Ascending aorta (tissue), 2 donors: ENCODE measurements at regions of chr3 and their contacts with region 1.

Region 1: DNA sequence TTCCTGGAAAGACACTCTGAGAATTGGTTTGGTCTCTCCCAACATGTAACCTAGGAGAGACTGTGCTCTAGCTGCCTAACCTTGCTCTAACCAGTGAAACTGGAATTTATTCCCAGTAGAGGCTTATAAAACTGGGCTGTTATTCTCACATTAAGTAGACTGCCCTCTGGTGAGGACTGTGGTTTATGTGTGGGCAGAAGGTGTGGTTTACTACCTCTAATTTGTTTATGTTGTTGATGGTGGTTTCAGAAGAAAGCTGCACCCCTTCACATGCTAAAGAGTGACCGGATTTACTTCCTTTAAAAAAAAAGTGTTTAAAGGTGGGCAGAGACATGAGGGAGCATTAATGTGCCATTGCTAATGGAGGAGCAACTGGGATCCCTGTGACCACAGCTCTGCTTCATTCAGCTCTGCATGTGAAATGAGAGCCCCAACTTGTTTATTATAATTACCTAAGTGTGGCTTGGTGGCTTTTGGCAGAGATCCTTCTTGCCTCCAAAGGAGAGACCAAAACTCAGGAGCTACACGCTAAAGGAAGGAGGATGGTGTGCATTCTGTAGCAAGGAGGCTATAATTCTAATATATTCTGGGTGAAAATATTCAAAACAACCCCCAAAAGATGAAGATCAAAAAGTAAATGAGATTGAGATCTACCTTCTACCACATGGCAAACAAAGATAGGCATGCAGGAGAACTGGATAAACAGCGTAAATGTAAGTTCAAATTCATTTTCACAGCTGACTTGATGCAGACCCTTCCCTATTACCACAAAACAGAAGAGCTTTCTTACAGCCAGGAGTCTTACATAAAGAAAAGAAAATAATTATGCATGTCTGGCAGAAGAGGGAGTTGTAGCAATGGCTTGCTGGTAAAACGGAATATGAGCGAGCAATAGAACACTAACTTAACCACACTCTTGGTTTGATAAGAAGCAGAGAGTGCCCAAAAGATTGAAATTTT is 273.0 kb downstream of the MECOM start:
- DNase-seq: no peak
- H3K4me3 ChIP-seq: no peak overlapping the region
- H3K27ac ChIP-seq: peak overlapping the region; percentile 72 to 74
- H3K4me1 ChIP-seq: peaks cover 0 to 18% of the 10 kb centered on the region in 2 donors
- H3K27me3 ChIP-seq: no peaks in the 10 kb centered on the region
- CTCF ChIP-seq: peak in 1 of 3 experiments; percentile 48

Region 2: GRCh38 chr3:169218314-169218983 is 172.1 kb before region 1 on chr3:
- intact Hi-C with region 1: loop called (anchors 5 kb)
- DNase-seq: peak in 1 of 2 donors; percentile 78
- H3K4me3 ChIP-seq: no peak overlapping the region
- H3K27ac ChIP-seq: peak overlapping the region in 1 of 2 donors; percentile 11
- H3K4me1 ChIP-seq: no peaks in the 10 kb centered on the region
- H3K27me3 ChIP-seq: no peaks in the 10 kb centered on the region
- CTCF ChIP-seq: peak; percentile 56 to 78 (median 73)

Region 3: DNA sequence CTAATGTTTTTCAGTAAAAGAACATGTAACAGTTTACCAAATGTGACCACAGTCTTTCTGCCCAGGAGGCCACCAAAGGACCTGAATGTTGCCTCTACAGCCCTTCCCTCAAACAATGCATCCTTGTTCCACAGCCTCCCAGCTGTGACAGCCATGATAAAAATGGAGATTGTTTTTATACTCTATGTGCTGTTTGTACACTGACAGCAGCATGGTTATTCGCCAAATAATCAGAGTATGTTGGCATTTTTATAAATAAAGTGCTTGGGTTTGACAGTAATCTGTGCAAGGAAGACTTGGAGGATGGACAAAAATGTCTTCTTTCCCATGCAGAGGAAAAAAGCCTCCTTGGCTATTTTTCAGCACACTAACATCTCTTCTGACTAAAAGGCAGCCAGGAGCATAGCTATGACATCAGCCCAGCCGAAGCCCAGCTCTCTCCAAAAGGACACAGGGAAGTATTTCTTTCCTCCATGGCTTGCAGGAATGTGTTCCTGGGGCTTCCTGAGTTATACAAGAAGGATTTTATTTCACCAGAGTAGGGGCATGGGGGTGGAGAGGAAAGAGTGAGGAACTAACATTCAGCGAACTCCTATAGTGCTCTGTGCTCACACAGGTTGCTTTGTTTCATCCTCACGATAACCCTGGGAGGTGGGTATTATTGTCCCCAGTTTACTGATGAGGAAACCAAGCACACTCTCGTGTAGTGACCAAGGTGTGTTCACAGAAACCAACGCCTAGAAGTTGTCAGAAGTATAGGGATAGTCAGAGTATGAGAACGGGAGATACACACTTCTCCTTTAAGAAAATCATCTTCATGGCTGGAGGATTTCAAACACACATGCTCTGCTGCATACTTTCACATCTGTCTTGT is 66.7 kb before region 1 on chr3:
- intact Hi-C with region 1: loop called (anchors 5 kb)
- DNase-seq: peak in 1 of 2 donors; percentile 75
- H3K4me3 ChIP-seq: peak overlapping the region in 1 of 2 donors; percentile 9
- H3K27ac ChIP-seq: peak overlapping the region; percentile 54 to 56
- H3K4me1 ChIP-seq: peaks cover 0 to 10% of the 10 kb centered on the region in 2 donors
- H3K27me3 ChIP-seq: no peaks in the 10 kb centered on the region
- CTCF ChIP-seq: no peak

Region 4: GRCh38 chr3:169604568-169604967 is 214.0 kb after region 1 on chr3:
- intact Hi-C with region 1: no loop called
- DNase-seq: no peak
- H3K4me3 ChIP-seq: no peak overlapping the region
- H3K27ac ChIP-seq: no peak overlapping the region
- H3K4me1 ChIP-seq: peaks cover 0 to 20% of the 10 kb centered on the region in 2 donors
- H3K27me3 ChIP-seq: no peaks in the 10 kb centered on the region
- CTCF ChIP-seq: no peak

Region 5: GRCh38 chr3:169764452-169765274 is 374.1 kb after region 1 on chr3 and contains the start of gene TERC:
- intact Hi-C with region 1: loop called (anchors 10 kb)
- DNase-seq: peak; percentile 77 to 98
- H3K4me3 ChIP-seq: peak within 1 kb of the TSS; percentile 75 to 83
- H3K27ac ChIP-seq: peak within 1 kb of the TSS; percentile 96 to 97
- H3K4me1 ChIP-seq: peaks cover 3 to 8% of the 10 kb centered on the region in 2 donors
- H3K27me3 ChIP-seq: no peaks in the 10 kb centered on the region
- CTCF ChIP-seq: no peak
- total RNA-seq, gene TERC: 260 TPM